Activated CD4-positive, alpha-beta T cell treated with anti-CD3 and anti-CD28 coated beads for 36 hours (primary cell): ENCODE measurements at regions of chr2 and their contacts with region 1.

Region 1: DNA sequence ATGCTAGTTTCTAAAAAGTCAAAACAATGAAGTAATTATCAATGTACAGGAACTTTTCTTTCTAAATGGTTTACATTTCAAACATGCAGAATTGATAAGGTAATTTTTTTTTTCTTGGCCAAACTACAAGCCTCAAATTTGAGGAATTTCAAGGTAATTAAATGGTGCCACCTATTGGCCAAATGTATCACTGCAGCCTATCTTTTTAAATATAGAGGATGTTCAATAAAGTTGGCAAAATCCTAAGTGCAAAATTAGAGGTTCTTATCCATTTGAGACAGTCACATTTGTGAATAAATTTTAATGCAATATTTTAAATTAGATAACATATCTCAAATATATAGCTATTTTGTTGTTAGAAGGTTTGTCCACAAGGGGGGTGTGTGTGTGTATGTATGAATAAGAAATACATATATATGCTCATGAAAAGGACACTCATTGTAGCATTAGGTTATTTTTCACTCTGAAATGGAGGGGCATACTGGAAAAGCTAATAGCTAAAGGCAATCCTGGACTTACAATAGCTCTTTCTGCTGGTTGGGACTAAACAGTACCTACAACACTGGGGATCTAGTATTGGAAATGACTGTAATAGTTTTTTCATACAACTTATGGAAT is 26.2 kb downstream of the MMADHC start:
- DNase-seq: peak; percentile 15
- ATAC-seq: no peak
- H3K4me3 Mint-ChIP-seq: no peak overlapping the region
- H3K27ac Mint-ChIP-seq: no peak overlapping the region
- H3K4me1 Mint-ChIP-seq: no peaks in the 10 kb centered on the region
- H3K27me3 Mint-ChIP-seq: no peaks in the 10 kb centered on the region

Region 2: GRCh38 chr2:149017116-149017985 is 544.1 kb before region 1 on chr2:
- CTCF ChIA-PET with region 1: interaction called, 59 read pairs
- POLR2A ChIA-PET with region 1: no interaction called
- intact Hi-C with region 1: loop called (anchors 1 kb)
- DNase-seq: peak; percentile 86
- ATAC-seq: peak; percentile 61
- H3K4me3 Mint-ChIP-seq: no peak overlapping the region
- H3K27ac Mint-ChIP-seq: no peak overlapping the region
- H3K4me1 Mint-ChIP-seq: peaks cover 2% of the 10 kb centered on the region
- H3K27me3 Mint-ChIP-seq: peaks cover 1% of the 10 kb centered on the region

Region 3: DNA sequence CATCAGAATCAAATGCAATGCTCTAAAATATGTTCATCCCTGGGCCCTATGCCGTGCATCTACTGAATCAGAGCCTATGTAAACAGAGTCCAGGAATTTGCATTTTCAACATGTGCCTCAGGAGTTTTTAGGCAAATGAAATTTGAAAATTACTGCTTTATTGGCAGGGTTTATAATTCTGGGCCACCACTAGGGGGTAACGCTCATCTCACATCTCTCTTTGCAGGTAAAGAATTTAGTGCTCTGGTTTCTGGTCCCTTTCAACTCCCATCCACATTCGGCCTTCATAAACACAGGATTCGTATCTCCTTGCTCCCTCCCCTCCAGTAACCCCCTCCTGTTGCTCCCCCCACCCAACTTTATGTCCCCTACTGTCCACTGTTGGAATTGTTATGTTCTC is 473.7 kb before region 1 on chr2:
- CTCF ChIA-PET with region 1: no interaction called
- POLR2A ChIA-PET with region 1: no interaction called
- intact Hi-C with region 1: loop called in 1 of 2 experiments (anchors 5 kb)
- DNase-seq: peak; percentile 8
- ATAC-seq: no peak
- H3K4me3 Mint-ChIP-seq: no peak overlapping the region
- H3K27ac Mint-ChIP-seq: no peak overlapping the region
- H3K4me1 Mint-ChIP-seq: no peaks in the 10 kb centered on the region
- H3K27me3 Mint-ChIP-seq: peaks cover 11% of the 10 kb centered on the region

Region 4: GRCh38 chr2:149430743-149431737 is 130.4 kb before region 1 on chr2:
- CTCF ChIA-PET with region 1: no interaction called
- POLR2A ChIA-PET with region 1: no interaction called
- intact Hi-C with region 1: loop called in 1 of 2 experiments (anchors 10 kb)
- DNase-seq: no peak
- ATAC-seq: no peak
- H3K4me3 Mint-ChIP-seq: no peak overlapping the region
- H3K27ac Mint-ChIP-seq: no peak overlapping the region
- H3K4me1 Mint-ChIP-seq: no peaks in the 10 kb centered on the region
- H3K27me3 Mint-ChIP-seq: peaks cover 8% of the 10 kb centered on the region

Region 5: GRCh38 chr2:149579972-149580882 is 18.8 kb after region 1 on chr2:
- CTCF ChIA-PET with region 1: interaction called, 13 read pairs
- POLR2A ChIA-PET with region 1: no interaction called
- intact Hi-C with region 1: no loop called
- DNase-seq: no peak
- ATAC-seq: no peak
- H3K4me3 Mint-ChIP-seq: no peak overlapping the region
- H3K27ac Mint-ChIP-seq: no peak overlapping the region
- H3K4me1 Mint-ChIP-seq: peaks cover 48% of the 10 kb centered on the region
- H3K27me3 Mint-ChIP-seq: no peaks in the 10 kb centered on the region